Activated B cell treated with CpG ODN at 0.5 μM for 24 hours (primary cell): ENCODE measurements at regions of chr12 and their contacts with region 1.

Region 1: GRCh38 chr12:66693901-66694675 is 15.2 kb upstream of the GRIP1 start:
- DNase-seq: no peak
- ATAC-seq: peak; percentile 94
- H3K4me3 Mint-ChIP-seq: no peak overlapping the region
- H3K27ac Mint-ChIP-seq: no peak overlapping the region
- H3K4me1 Mint-ChIP-seq: peaks cover 16% of the 10 kb centered on the region
- H3K27me3 Mint-ChIP-seq: peaks cover 2% of the 10 kb centered on the region
- CTCF ChIP-seq: no peak

Region 2: DNA sequence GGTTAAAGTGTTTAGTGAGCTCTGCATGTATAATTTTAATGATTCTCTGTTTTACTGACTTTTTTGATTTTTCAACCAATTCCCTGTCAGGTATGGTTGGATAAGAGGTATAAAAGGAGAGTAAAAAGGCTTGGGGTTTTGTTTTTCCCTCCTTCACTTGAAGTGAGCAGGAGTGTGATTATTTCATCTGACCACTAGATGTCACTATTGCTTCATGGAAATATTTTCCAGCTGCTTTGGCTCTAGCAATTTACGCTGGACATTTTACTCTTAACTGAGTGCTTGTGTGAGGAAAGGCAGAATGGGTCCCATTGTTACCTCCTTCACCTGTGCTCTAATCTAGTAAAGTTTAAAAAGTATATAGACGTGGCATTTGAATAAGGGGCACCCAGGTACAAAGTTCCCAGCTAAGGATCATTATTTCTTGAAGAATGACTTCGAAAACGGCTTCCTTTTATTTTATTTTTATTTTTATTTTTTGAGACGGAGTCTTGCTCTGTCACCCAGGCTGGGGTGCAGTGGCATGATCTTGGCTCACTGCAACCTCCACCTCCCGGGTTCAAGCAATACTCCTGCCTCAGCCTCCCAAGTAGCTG is 1803.1 kb before region 1 on chr12:
- CTCF ChIA-PET with region 1: no interaction called
- POLR2A ChIA-PET with region 1: no interaction called
- intact Hi-C with region 1: loop called (anchors 1 kb)
- DNase-seq: no peak
- ATAC-seq: no peak
- H3K4me3 Mint-ChIP-seq: no peak overlapping the region
- H3K27ac Mint-ChIP-seq: no peak overlapping the region
- H3K4me1 Mint-ChIP-seq: no peaks in the 10 kb centered on the region
- H3K27me3 Mint-ChIP-seq: peaks cover 34% of the 10 kb centered on the region
- CTCF ChIP-seq: peak; percentile 95

Region 3: DNA sequence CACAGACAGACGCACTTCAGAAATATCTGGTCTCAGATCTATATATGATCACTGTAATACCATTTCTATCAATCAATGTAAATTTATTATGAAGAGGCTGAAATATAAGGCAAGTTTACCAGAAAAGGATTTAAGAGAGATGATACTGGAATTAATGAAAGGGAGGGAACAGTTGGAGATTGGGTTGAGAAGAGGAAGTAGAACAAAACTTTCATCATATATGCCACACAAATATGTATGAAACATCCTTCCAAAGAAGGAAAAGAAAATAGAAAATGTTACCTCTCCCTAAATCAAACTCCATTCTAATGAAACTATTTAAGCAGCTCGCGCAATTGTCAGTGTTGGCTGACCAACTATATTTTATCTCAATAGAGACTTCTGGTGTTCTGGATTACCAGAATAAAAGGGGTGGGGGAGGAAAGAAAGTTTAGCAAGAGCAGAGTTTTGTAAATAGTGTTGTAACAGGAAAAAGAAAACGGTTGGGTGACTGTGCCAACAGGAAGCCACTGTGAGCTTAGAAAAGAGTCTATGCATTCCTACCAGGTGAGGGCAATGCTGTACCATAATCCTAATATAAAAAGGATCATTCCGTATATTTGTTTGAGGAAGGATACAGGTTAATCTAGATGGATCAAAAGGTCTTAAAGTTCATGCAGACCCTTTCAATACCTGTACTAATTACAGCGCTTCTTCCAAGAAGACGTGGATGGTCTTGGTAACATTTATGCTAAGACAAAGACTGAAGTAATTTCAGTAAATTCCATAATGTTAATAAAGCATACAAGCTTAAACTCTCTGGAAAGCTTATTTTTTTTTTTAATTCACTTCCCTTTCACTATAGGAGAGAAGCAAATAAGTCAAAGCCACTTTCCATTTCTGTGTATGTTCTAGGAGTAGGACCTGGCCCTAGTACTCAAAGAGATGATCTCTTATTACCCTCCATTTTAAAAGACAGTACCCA is 549.0 kb before region 1 on chr12:
- CTCF ChIA-PET with region 1: interaction called, 6 read pairs
- POLR2A ChIA-PET with region 1: no interaction called
- intact Hi-C with region 1: loop called (anchors 2 kb)
- DNase-seq: no peak
- ATAC-seq: no peak
- H3K4me3 Mint-ChIP-seq: no peak overlapping the region
- H3K27ac Mint-ChIP-seq: peak overlapping the region; percentile 56
- H3K4me1 Mint-ChIP-seq: peaks cover 20% of the 10 kb centered on the region
- H3K27me3 Mint-ChIP-seq: no peaks in the 10 kb centered on the region
- CTCF ChIP-seq: no peak

Region 4: GRCh38 chr12:66269757-66270383 is 424.2 kb before region 1 on chr12:
- CTCF ChIA-PET with region 1: interaction called, 89 read pairs
- POLR2A ChIA-PET with region 1: no interaction called
- intact Hi-C with region 1: loop called (anchors 1 kb)
- DNase-seq: no peak
- ATAC-seq: no peak
- H3K4me3 Mint-ChIP-seq: no peak overlapping the region
- H3K27ac Mint-ChIP-seq: no peak overlapping the region
- H3K4me1 Mint-ChIP-seq: no peaks in the 10 kb centered on the region
- H3K27me3 Mint-ChIP-seq: peaks cover 2% of the 10 kb centered on the region
- CTCF ChIP-seq: no peak

Region 5: GRCh38 chr12:66352197-66352596 is 341.9 kb before region 1 on chr12:
- CTCF ChIA-PET with region 1: interaction called, 72 read pairs
- POLR2A ChIA-PET with region 1: interaction called, 3 read pairs
- intact Hi-C with region 1: loop called (anchors 1 kb)
- DNase-seq: no peak
- ATAC-seq: peak; percentile 37
- H3K4me3 Mint-ChIP-seq: no peak overlapping the region
- H3K27ac Mint-ChIP-seq: no peak overlapping the region
- H3K4me1 Mint-ChIP-seq: no peaks in the 10 kb centered on the region
- H3K27me3 Mint-ChIP-seq: no peaks in the 10 kb centered on the region
- CTCF ChIP-seq: no peak

Region 6: GRCh38 chr12:66500841-66501240 is 193.2 kb before region 1 on chr12:
- CTCF ChIA-PET with region 1: no interaction called
- POLR2A ChIA-PET with region 1: no interaction called
- intact Hi-C with region 1: no loop called
- DNase-seq: no peak
- ATAC-seq: no peak
- H3K4me3 Mint-ChIP-seq: no peak overlapping the region
- H3K27ac Mint-ChIP-seq: no peak overlapping the region
- H3K4me1 Mint-ChIP-seq: no peaks in the 10 kb centered on the region
- H3K27me3 Mint-ChIP-seq: no peaks in the 10 kb centered on the region
- CTCF ChIP-seq: no peak

Region 7: DNA sequence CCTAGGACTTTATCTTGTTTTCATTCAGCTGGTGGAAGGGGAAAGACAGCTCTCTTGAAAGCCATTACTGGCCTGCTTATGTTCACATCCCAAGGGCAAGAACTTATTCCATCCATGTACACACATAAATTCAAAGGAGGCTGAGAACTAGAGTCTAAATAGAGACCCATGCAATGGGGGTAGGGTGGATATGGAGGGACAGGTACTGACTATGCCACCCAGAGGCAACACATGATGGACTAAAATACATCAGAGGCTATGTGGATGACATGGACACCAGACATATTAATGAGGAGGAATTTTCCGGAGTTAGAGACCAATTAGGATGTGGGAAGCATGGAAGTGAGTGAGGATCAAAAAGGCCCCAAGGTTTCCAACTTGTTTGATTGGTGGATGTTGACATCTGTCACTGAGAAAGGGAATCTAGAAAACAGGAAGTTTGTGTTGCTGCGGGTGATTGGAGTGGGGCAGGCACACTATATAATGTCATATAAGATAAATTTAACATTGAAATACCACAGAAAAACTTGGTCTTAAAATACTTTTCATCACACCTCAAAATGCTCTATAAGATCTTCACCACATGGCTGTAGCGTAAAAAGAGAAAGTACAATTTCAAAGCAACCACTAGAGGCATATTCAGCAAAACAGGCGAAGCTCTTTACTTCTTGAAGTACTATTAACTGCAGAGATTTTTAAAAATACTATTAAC is 145.6 kb before region 1 on chr12:
- CTCF ChIA-PET with region 1: interaction called, 7 read pairs
- POLR2A ChIA-PET with region 1: no interaction called
- intact Hi-C with region 1: loop called (anchors 5 kb)
- DNase-seq: no peak
- ATAC-seq: no peak
- H3K4me3 Mint-ChIP-seq: no peak overlapping the region
- H3K27ac Mint-ChIP-seq: peak overlapping the region; percentile 41
- H3K4me1 Mint-ChIP-seq: peaks cover 27% of the 10 kb centered on the region
- H3K27me3 Mint-ChIP-seq: no peaks in the 10 kb centered on the region
- CTCF ChIP-seq: no peak